T-cell (primary cell): ENCODE measurements at regions of chr12 and their contacts with region 1.

Region 1: DNA sequence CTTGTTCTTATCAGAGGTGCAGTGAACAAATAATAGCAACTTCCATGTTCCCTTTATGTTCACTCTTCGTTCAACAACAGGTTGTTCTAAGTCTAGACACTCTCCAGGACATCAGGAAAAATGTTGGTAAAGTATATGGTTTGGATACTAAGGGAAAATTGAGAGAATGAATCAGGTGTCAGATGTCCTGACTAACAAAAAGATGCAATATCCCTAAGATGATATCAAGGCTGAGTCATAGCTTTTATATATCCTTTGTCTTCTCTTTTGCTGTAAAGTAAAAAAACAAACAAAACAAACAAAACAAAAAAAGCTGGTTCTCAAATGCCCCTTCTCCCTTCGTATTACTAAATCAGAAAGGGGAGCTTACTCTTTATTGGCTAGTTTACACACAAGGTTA is 11.1 kb downstream of the GLIPR1L1 start:
- DNase-seq: no peak
- ATAC-seq: no peak
- H3K4me3 ChIP-seq: no peak overlapping the region
- H3K4me3 Mint-ChIP-seq: no peak overlapping the region
- H3K27ac ChIP-seq: no peak overlapping the region
- H3K27ac Mint-ChIP-seq: no peak overlapping the region
- H3K4me1 ChIP-seq: no peaks in the 10 kb centered on the region
- H3K4me1 Mint-ChIP-seq: peaks cover 0 to 7% (median 7%) of the 10 kb centered on the region in 3 donors
- H3K27me3 ChIP-seq: peaks cover 0 to 3% of the 10 kb centered on the region in 2 experiments
- H3K27me3 Mint-ChIP-seq: peaks cover 4% of the 10 kb centered on the region in 2 donors

Region 2: GRCh38 chr12:75103822-75104221 is 241.7 kb before region 1 on chr12:
- CTCF ChIA-PET with region 1: no interaction called
- POLR2A ChIA-PET with region 1: no interaction called
- DNase-seq: no peak
- ATAC-seq: no peak
- H3K4me3 ChIP-seq: no peak overlapping the region
- H3K4me3 Mint-ChIP-seq: no peak overlapping the region
- H3K27ac ChIP-seq: no peak overlapping the region
- H3K27ac Mint-ChIP-seq: no peak overlapping the region
- H3K4me1 ChIP-seq: no peaks in the 10 kb centered on the region
- H3K4me1 Mint-ChIP-seq: no peaks in the 10 kb centered on the region
- H3K27me3 ChIP-seq: no peaks in the 10 kb centered on the region
- H3K27me3 Mint-ChIP-seq: no peaks in the 10 kb centered on the region

Region 3: GRCh38 chr12:75334384-75335030 is 11.0 kb before region 1 on chr12 and contains the start of gene GLIPR1L1:
- CTCF ChIA-PET with region 1: interaction called in 1 of 2 experiments, 13 read pairs
- POLR2A ChIA-PET with region 1: no interaction called
- DNase-seq: peak; percentile 52 to 90 (median 74)
- ATAC-seq: peak; percentile 81 to 90 (median 86)
- H3K4me3 ChIP-seq: peak within 1 kb of the TSS; percentile 28 to 45
- H3K4me3 Mint-ChIP-seq: peak within 1 kb of the TSS; percentile 55 to 71 (median 66)
- H3K27ac ChIP-seq: no peak within 1 kb of the TSS
- H3K27ac Mint-ChIP-seq: no peak within 1 kb of the TSS
- H3K4me1 ChIP-seq: peaks cover 2 to 16% of the 10 kb centered on the region in 2 experiments
- H3K4me1 Mint-ChIP-seq: peaks cover 18 to 21% (median 19%) of the 10 kb centered on the region in 3 donors
- H3K27me3 ChIP-seq: peaks cover 4 to 12% of the 10 kb centered on the region in 2 experiments
- H3K27me3 Mint-ChIP-seq: peaks cover 15 to 19% of the 10 kb centered on the region in 2 donors
- total RNA-seq, gene GLIPR1L1: not detected

Region 4: DNA sequence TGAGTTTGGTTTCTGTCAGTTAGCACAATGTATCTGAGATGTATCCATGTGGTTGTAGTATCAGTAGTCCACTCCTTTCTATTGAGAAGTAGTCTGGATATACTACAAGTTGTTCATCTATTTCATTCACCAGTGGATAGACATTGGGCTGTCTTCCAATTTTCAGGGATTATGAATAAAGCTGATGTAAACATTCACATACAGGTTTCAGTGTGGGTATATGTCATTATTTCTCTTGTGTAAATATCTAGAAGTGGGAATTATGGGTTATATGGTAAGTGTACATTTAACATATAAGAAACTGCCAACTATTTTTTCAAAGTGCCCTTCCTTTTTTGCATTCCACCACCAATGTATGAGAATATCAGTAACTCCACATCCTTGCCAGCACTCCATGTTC is 650.2 kb after region 1 on chr12:
- CTCF ChIA-PET with region 1: no interaction called
- POLR2A ChIA-PET with region 1: interaction called in 1 of 2 experiments, 17 read pairs
- DNase-seq: no peak
- ATAC-seq: no peak
- H3K4me3 ChIP-seq: no peak overlapping the region
- H3K4me3 Mint-ChIP-seq: no peak overlapping the region
- H3K27ac ChIP-seq: no peak overlapping the region
- H3K27ac Mint-ChIP-seq: no peak overlapping the region
- H3K4me1 ChIP-seq: no peaks in the 10 kb centered on the region
- H3K4me1 Mint-ChIP-seq: peaks cover 0 to 3% (median 3%) of the 10 kb centered on the region in 3 donors
- H3K27me3 ChIP-seq: no peaks in the 10 kb centered on the region
- H3K27me3 Mint-ChIP-seq: peaks cover 0 to 4% of the 10 kb centered on the region in 2 donors